ENCODE measurements at regions of chr2 and their contacts with region 1.

Region 1: GRCh38 chr2:27428213-27428977 is at the start of gene NRBP1:
- DNase-seq: peak; percentile 99
- H3K4me3 ChIP-seq: peak within 1 kb of the TSS; percentile 74 to 92
- H3K27ac ChIP-seq: peak within 1 kb of the TSS; percentile 92 to 93
- H3K4me1 ChIP-seq: peaks cover 6 to 10% of the 10 kb centered on the region in 2 experiments; a peak in 3 of 4 replicates
- H3K27me3 ChIP-seq: no peaks in the 10 kb centered on the region
- CTCF ChIP-seq: peak; percentile 41
- EP300 ChIP-seq: peak; percentile 4 to 37; a peak in 2 of 4 replicates
- RAD21 ChIP-seq: no peak
- polyA plus RNA-seq, gene NRBP1: 182 and 227 TPM in 2 replicates

Region 2: DNA sequence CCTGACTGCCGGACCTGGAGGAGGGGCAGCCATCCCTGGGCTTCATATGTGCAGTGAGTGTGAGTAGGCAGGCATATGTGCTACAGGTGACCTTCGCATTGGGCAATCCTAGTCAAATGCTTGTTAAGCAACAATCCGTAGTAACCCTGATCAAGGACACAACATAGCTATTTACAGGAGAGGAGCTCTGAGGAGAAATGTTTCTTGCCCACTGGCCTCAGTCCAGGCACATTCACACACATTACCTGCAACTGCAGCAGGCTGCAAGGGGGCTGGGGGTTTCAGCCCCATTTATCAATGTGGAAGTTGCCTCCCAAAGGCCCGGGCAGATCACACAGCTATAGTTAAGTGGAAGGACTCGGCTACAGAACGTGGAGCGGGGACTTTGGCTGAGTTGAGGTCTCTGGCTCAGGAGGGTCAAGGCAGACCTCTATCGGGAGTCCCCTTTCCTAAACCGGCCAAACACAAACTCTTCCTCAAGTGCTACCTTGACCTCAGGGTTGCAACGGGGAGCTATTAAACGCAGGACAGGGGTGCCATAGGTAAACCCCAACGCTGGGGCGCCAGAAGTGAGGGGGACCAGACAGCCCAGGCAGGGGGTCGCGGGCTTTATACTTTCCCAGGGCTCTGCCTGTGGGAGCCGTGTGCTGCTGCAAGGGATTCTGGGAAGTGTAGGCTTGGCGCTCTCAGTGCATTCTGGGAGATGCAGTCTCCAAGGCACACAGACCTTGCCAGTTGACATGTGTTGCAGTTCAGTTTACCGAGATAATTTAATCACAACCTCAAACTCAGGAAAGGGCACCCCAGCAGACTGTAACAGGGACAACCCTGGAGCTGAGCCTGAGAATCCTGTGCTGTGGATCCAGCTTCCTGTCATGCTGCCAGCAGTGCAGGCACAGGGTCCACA is 332.4 kb before region 1 on chr2:
- CTCF ChIA-PET with region 1: no interaction called
- POLR2A ChIA-PET with region 1: no interaction called
- DNase-seq: peak; percentile 91
- H3K4me3 ChIP-seq: peak overlapping the region in 1 of 2 experiments; percentile 43; a peak in 2 of 4 replicates
- H3K27ac ChIP-seq: peak overlapping the region in 1 of 2 experiments; percentile 92; a peak in 2 of 4 replicates
- H3K4me1 ChIP-seq: peaks cover 4 to 21% of the 10 kb centered on the region in 2 experiments; a peak in 2 of 4 replicates
- H3K27me3 ChIP-seq: no peaks in the 10 kb centered on the region
- CTCF ChIP-seq: no peak
- EP300 ChIP-seq: no peak
- RAD21 ChIP-seq: peak; percentile 35

Region 3: GRCh38 chr2:27356382-27357181 is 71.8 kb before region 1 on chr2 and contains the start of gene GTF3C2:
- CTCF ChIA-PET with region 1: no interaction called
- POLR2A ChIA-PET with region 1: interaction called, 10 read pairs
- DNase-seq: peak; percentile 97
- H3K4me3 ChIP-seq: peak within 1 kb of the TSS; percentile 87 to 93
- H3K27ac ChIP-seq: peak within 1 kb of the TSS; percentile 90 to 93
- H3K4me1 ChIP-seq: peaks cover 7 to 19% of the 10 kb centered on the region in 2 experiments; a peak in 3 of 4 replicates
- H3K27me3 ChIP-seq: no peaks in the 10 kb centered on the region
- CTCF ChIP-seq: no peak
- EP300 ChIP-seq: peak in 1 of 2 experiments; percentile 24; a peak in 1 of 4 replicates
- RAD21 ChIP-seq: no peak
- polyA plus RNA-seq, gene GTF3C2: 65.8 and 76.0 TPM in 2 replicates

Region 4: DNA sequence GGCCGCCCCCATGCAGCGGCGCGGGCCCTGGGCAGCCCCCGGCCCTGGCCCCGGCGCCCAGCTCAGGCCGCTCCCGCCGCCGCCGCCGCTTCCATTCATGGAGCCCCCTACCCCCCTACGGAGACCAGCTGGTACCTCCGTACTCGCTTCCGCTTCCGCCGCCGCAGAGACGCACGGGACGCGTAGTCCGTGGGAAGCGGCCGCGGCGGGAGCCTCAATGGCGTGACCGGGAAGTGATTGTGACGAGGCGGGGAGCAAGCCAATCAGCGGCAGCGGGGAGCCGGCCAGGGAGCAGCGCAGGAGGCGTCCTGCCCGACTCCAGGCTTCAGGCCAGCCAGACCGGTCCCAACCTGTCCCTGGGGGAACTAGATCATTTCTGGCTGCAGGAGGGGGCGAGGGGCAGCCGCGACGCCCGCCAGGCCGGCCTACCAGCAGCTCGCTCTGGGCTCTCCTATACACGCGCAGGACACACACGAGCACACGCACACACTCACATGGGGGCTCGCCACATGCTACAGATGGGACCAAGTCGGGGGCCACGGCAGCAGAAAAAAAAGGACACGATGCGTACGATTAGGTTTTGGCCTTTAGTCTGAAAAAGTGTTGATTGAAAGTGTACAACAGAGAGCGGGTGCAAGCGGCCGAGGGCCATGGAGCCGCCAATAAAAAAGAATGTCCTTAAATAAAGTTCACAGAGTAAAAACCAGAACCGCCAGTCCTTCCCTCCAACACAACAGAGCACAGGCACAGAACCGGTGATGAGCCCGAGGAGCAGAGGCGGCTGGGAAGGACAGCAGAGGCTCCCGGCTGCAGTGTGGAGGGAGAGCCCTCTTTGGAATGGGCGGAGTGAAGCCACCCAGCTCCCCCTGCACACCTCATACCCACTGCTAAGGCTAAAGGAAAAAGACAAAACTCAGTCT is 47.5 kb before region 1 on chr2 and contains the start of gene ZNF513:
- CTCF ChIA-PET with region 1: interaction called, 7 read pairs
- POLR2A ChIA-PET with region 1: interaction called, 17 read pairs
- DNase-seq: peak; percentile 99
- H3K4me3 ChIP-seq: peak within 1 kb of the TSS; percentile 80 to 86
- H3K27ac ChIP-seq: peak within 1 kb of the TSS; percentile 68 to 95
- H3K4me1 ChIP-seq: peaks cover 15 to 53% of the 10 kb centered on the region in 2 experiments; a peak in 3 of 4 replicates
- H3K27me3 ChIP-seq: no peaks in the 10 kb centered on the region
- CTCF ChIP-seq: no peak
- EP300 ChIP-seq: no peak
- RAD21 ChIP-seq: no peak
- polyA plus RNA-seq, gene ZNF513: 53.8 and 63.7 TPM in 2 replicates

Region 5: GRCh38 chr2:27409321-27410073 is 18.9 kb before region 1 on chr2 and contains the start of gene PPM1G:
- CTCF ChIA-PET with region 1: interaction called, 94 read pairs
- POLR2A ChIA-PET with region 1: interaction called, 66 read pairs
- DNase-seq: peak; percentile 99
- H3K4me3 ChIP-seq: peak within 1 kb of the TSS; percentile 78 to 98
- H3K27ac ChIP-seq: peak within 1 kb of the TSS; percentile 82 to 90
- H3K4me1 ChIP-seq: peaks cover 0 to 6% of the 10 kb centered on the region in 2 experiments; a peak in 2 of 4 replicates
- H3K27me3 ChIP-seq: no peaks in the 10 kb centered on the region
- CTCF ChIP-seq: no peak
- EP300 ChIP-seq: no peak
- RAD21 ChIP-seq: no peak
- polyA plus RNA-seq, gene PPM1G: 99.7 and 113 TPM in 2 replicates

Region 6: DNA sequence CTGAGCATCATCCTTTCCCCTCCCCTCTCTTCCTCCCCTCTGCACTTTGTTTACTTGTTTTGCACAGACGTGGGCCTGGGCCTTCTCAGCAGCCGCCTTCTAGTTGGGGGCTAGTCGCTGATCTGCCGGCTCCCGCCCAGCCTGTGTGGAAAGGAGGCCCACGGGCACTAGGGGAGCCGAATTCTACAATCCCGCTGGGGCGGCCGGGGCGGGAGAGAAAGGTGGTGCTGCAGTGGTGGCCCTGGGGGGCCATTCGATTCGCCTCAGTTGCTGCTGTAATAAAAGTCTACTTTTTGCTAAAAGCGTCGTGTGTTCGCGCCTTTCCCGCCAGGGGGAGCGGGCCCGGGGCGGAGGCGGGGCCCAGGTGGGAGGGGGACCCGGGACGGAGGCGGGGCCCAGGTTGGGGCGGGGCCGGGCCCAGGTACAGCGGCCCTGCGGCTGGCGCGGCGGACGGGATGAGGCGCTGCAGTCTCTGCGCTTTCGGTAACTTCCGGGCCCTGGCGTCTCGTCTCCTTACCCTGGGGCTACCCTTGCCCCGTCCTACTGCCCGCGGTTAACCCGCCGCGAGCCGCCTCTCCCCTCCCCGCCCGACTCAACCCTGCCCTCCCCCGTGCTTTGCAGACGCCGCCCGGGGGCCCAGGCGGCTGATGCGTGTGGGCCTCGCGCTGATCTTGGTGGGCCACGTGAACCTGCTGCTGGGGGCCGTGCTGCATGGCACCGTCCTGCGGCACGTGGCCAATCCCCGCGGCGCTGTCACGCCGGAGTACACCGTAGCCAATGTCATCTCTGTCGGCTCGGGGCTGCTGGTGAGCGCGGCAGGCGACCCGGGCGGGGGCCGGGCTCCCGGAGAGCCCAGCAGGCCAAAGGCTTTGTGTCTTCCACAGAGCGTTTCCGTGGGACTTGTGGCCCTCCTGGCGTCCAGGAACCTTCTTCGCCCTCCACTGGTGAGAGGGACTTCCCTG is 13.8 kb after region 1 on chr2 and contains the start of gene KRTCAP3:
- CTCF ChIA-PET with region 1: interaction called, 31 read pairs
- POLR2A ChIA-PET with region 1: interaction called, 6 read pairs
- DNase-seq: peak; percentile 58
- H3K4me3 ChIP-seq: no peak within 1 kb of the TSS
- H3K27ac ChIP-seq: no peak within 1 kb of the TSS; a peak in 1 of 4 replicates
- H3K4me1 ChIP-seq: no peaks in the 10 kb centered on the region
- H3K27me3 ChIP-seq: no peaks in the 10 kb centered on the region
- CTCF ChIP-seq: no peak
- EP300 ChIP-seq: no peak
- RAD21 ChIP-seq: no peak
- polyA plus RNA-seq, gene KRTCAP3: 3.6 and 4.1 TPM in 2 replicates

Region 7: DNA sequence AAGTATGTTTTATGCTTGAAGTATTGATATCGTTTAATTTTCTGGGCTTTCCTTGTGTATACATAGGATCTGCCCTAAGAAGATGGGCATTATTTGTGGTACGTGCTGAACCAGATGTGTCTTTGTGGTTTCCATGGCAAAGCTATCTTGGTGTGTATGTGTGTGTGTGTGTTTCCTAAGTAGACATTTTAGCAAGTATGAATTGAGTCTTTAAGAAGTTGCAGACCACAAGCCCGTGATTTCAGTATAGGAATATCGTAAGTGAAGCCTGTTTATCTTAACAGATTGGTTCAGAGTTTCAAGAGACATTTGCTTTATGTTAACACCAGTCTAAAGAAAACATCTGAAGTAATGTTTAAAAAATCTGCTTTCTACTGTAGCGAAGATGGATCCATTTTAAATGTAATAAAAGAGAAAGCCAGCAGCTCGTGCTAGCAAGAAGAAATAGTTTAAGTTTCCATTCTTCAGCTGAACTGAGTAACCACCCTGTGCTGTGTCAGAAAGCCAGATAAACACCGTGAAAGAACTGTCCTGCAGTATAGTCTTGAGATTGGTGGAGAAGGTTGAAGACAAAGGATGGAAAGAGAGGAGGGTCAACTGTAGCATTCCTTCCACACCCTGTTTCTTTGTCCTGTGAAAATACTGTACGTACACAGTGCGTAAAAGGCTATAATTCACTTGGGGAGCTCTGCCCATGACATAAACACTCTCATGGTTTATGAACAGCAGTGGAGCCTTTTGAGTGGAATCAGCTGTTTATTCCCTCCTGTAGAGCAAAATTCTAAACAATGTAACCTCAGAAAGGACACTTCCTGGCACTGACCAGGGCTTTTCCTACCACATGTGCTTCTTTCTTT is 872.3 kb after region 1 on chr2:
- CTCF ChIA-PET with region 1: no interaction called
- POLR2A ChIA-PET with region 1: no interaction called
- DNase-seq: no peak
- H3K4me3 ChIP-seq: no peak overlapping the region
- H3K27ac ChIP-seq: no peak overlapping the region
- H3K4me1 ChIP-seq: no peaks in the 10 kb centered on the region; a peak in 1 of 4 replicates
- H3K27me3 ChIP-seq: no peaks in the 10 kb centered on the region
- CTCF ChIP-seq: no peak
- EP300 ChIP-seq: no peak
- RAD21 ChIP-seq: no peak

Measured in SK-N-SH (cell line).